GM12878 (cell line): ENCODE measurements at regions of chr12 and their contacts with region 1.

Region 1: DNA sequence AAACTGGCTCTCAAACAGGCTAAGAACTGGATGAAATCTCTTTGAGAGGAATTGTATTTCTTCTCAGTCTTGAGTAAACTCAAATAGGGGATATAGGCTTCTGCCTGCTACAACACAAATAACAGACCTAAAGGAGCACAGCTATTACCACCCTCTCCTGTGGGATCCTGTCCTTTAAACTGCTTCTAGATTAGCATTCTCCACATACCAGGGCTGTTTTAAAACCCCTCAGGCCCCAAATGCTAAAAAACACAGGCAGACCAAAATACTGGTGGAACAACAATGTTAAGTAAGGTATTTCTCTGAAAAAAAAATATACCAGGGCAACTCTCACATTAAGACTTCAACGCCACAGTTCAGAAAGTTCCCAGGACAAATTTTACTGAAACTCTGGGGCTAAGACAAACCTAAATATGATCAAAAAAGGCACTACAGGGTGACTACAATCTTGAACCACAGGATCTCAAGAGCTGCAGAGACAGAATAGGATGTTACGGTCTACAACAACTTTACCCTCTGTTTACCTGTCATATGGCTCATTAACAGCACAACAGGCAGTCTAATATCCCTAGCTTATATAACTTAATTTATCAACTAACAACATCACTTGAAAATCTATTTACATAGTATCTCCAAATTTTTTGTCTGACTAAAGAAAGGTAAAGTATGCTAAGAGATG is 7.2 kb downstream of the CPNE8 start:
- DNase-seq: no peak
- ATAC-seq: peak; percentile 13
- H3K4me3 ChIP-seq: no peak overlapping the region
- H3K27ac ChIP-seq: no peak overlapping the region
- H3K4me1 ChIP-seq: no peaks in the 10 kb centered on the region; the same call in none of the 2 replicates
- H3K27me3 ChIP-seq: no peaks in the 10 kb centered on the region
- CTCF ChIP-seq: no peak
- EP300 ChIP-seq: no peak
- POLR2A ChIP-seq: no peak
- RAD21 ChIP-seq: no peak

Region 2: GRCh38 chr12:38744041-38744440 is 154.1 kb before region 1 on chr12:
- CTCF ChIA-PET with region 1: no interaction called
- POLR2A ChIA-PET with region 1: no interaction called
- RAD21 ChIA-PET with region 1: no interaction called
- SMC1A ChIA-PET with region 1: no interaction called
- in situ Hi-C with region 1: no loop called
- intact Hi-C with region 1: no loop called
- DNase-seq: no peak
- ATAC-seq: no peak
- H3K4me3 ChIP-seq: no peak overlapping the region
- H3K27ac ChIP-seq: no peak overlapping the region
- H3K4me1 ChIP-seq: no peaks in the 10 kb centered on the region
- H3K27me3 ChIP-seq: no peaks in the 10 kb centered on the region
- CTCF ChIP-seq: no peak
- EP300 ChIP-seq: no peak
- POLR2A ChIP-seq: no peak
- RAD21 ChIP-seq: no peak

Region 3: GRCh38 chr12:38880288-38880687 is 17.9 kb before region 1 on chr12:
- CTCF ChIA-PET with region 1: interaction called, 14 read pairs
- POLR2A ChIA-PET with region 1: interaction called, 6 read pairs
- RAD21 ChIA-PET with region 1: interaction called, 170 read pairs
- SMC1A ChIA-PET with region 1: interaction called, 38 read pairs
- in situ Hi-C with region 1: no loop called
- intact Hi-C with region 1: no loop called
- DNase-seq: peak; percentile 30
- ATAC-seq: peak; percentile 86
- H3K4me3 ChIP-seq: no peak overlapping the region
- H3K27ac ChIP-seq: no peak overlapping the region
- H3K4me1 ChIP-seq: no peaks in the 10 kb centered on the region
- H3K27me3 ChIP-seq: no peaks in the 10 kb centered on the region
- CTCF ChIP-seq: no peak
- EP300 ChIP-seq: 0 out of 4 replicates have a peak, but pooled peaks of 1 of the 2 experiments have one; percentile 8
- POLR2A ChIP-seq: no peak
- RAD21 ChIP-seq: no peak

Region 4: DNA sequence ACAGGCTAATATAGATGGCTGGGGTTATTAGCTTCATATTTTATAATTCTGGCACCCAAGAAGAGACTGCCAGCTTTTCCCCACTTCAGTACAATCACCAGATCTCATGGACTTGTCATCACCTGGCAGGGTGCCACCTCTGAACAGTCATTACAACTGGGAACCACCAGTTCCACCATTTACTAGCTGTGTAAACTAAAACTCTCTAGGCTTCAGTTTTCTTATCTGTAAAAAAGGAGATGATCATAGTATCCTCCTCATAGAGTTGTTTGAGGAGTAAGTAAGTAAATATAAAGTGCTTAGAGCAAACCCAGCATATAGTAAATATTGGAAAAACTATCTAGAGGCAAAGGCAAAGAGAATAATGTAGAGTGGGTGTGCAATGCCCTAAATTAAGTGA is 12.1 kb before region 1 on chr12:
- CTCF ChIA-PET with region 1: interaction called, 14 read pairs
- POLR2A ChIA-PET with region 1: interaction called, 9 read pairs
- RAD21 ChIA-PET with region 1: interaction called, 170 read pairs
- SMC1A ChIA-PET with region 1: interaction called, 38 read pairs
- in situ Hi-C with region 1: no loop called
- intact Hi-C with region 1: no loop called
- DNase-seq: no peak
- ATAC-seq: peak; percentile 47
- H3K4me3 ChIP-seq: no peak overlapping the region
- H3K27ac ChIP-seq: no peak overlapping the region
- H3K4me1 ChIP-seq: no peaks in the 10 kb centered on the region
- H3K27me3 ChIP-seq: no peaks in the 10 kb centered on the region
- CTCF ChIP-seq: no peak
- EP300 ChIP-seq: no peak
- POLR2A ChIP-seq: no peak
- RAD21 ChIP-seq: no peak

Region 5: GRCh38 chr12:38969706-38970105 is 71.6 kb after region 1 on chr12:
- CTCF ChIA-PET with region 1: no interaction called
- POLR2A ChIA-PET with region 1: no interaction called
- RAD21 ChIA-PET with region 1: no interaction called
- SMC1A ChIA-PET with region 1: no interaction called
- in situ Hi-C with region 1: no loop called
- intact Hi-C with region 1: no loop called
- DNase-seq: no peak
- ATAC-seq: no peak
- H3K4me3 ChIP-seq: no peak overlapping the region
- H3K27ac ChIP-seq: no peak overlapping the region
- H3K4me1 ChIP-seq: no peaks in the 10 kb centered on the region
- H3K27me3 ChIP-seq: no peaks in the 10 kb centered on the region
- CTCF ChIP-seq: no peak
- EP300 ChIP-seq: no peak
- POLR2A ChIP-seq: no peak
- RAD21 ChIP-seq: no peak